H1 (cell line): ENCODE measurements at regions of chr3 and their contacts with region 1.

Region 1: DNA sequence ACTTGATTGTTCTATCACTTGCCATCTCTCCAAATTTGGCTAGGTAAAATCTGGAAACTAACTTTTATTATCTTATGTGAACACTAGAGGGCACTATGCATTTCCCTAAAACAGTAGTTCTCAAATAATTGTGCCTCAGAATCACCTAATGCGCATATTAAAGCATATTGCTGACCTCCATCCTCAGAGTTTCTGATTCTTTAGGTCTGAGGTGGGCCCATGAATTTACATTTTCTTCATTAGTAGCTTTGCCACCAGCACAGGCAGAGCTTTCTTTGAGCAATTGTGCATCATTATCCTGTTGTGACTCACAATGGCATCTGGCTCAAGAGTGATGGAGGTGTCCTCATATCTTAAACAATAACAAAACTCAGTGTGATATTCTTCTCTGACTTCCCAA is 17.5 kb upstream of the BCHE start:
- DNase-seq: no peak
- H3K4me3 ChIP-seq: no peak overlapping the region
- H3K27ac ChIP-seq: no peak overlapping the region
- H3K4me1 ChIP-seq: peaks cover 0 to 3% (median 0%) of the 10 kb centered on the region in 4 experiments; a peak in 1 of 7 replicates
- H3K27me3 ChIP-seq: no peaks in the 10 kb centered on the region
- CTCF ChIP-seq: peak in 1 of 3 experiments; percentile 51; a peak in 2 of 4 replicates
- EP300 ChIP-seq: no peak
- POLR2A ChIP-seq: no peak
- RAD21 ChIP-seq: peak; percentile 55 to 60

Region 2: DNA sequence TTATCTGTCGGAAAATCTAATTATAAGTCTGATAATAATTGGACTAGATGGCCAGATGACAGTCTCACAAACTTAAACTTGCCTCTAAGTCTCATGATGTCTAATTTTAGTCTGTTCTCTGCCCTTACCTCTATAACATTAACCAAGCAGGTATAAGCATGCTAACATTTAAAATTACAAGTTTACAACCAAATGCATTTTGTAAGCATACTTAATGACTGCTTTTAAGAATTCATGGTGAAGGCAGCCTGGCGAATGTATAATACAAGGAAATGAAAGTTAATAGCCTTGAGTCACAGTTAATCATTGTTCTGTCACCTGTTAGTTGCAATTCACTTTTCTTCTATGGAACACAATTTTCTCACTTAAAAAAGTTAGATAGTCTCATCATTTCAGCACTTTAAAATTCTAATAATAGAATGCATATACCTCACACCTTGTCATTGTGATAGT is 34.0 kb before region 1 on chr3:
- CTCF ChIA-PET with region 1: no interaction called
- POLR2A ChIA-PET with region 1: no interaction called
- DNase-seq: no peak
- H3K4me3 ChIP-seq: no peak overlapping the region
- H3K27ac ChIP-seq: no peak overlapping the region
- H3K4me1 ChIP-seq: no peaks in the 10 kb centered on the region
- H3K27me3 ChIP-seq: no peaks in the 10 kb centered on the region
- CTCF ChIP-seq: no peak
- EP300 ChIP-seq: no peak
- POLR2A ChIP-seq: no peak
- RAD21 ChIP-seq: no peak

Region 3: DNA sequence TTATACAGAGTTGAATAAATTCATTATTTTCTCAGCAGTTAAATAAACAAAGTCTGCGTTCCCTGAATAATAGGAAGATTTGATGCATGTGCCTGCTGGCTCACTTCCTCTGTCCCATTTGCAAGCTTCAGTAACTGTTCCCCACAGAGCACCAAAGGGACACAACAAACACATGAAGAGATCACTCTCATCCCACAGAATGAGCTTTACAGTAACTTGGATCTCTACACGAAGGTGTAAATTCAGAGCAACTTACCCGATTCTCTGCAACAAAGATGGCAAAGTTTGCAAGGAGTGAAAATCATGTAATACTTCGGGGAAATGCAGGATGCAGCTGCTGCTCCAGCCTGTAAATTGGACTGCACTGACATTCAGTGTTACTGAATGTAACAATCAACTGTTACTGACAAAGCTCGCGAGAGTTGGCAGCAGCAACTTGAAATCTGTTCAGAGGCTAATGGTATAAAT is 17.6 kb before region 1 on chr3 and contains the start of gene BCHE:
- CTCF ChIA-PET with region 1: no interaction called
- POLR2A ChIA-PET with region 1: no interaction called
- DNase-seq: no peak
- H3K4me3 ChIP-seq: peak within 1 kb of the TSS; percentile 15 to 47 (median 22); a peak in 5 of 8 replicates
- H3K27ac ChIP-seq: no peak within 1 kb of the TSS
- H3K4me1 ChIP-seq: peaks cover 0 to 4% (median 0%) of the 10 kb centered on the region in 4 experiments; a peak in 2 of 7 replicates
- H3K27me3 ChIP-seq: no peaks in the 10 kb centered on the region
- CTCF ChIP-seq: no peak
- EP300 ChIP-seq: no peak
- POLR2A ChIP-seq: no peak
- RAD21 ChIP-seq: no peak
- total RNA-seq, gene BCHE: 1.7 and 1.9 TPM in 2 replicates

Region 4: GRCh38 chr3:165868088-165868487 is 13.4 kb after region 1 on chr3:
- CTCF ChIA-PET with region 1: interaction called, 25 read pairs
- POLR2A ChIA-PET with region 1: no interaction called
- DNase-seq: no peak
- H3K4me3 ChIP-seq: no peak overlapping the region
- H3K27ac ChIP-seq: no peak overlapping the region
- H3K4me1 ChIP-seq: no peaks in the 10 kb centered on the region
- H3K27me3 ChIP-seq: no peaks in the 10 kb centered on the region
- CTCF ChIP-seq: no peak
- EP300 ChIP-seq: no peak
- POLR2A ChIP-seq: no peak
- RAD21 ChIP-seq: no peak

Region 5: GRCh38 chr3:165874663-165875489 is 20.2 kb after region 1 on chr3:
- CTCF ChIA-PET with region 1: interaction called, 25 read pairs
- POLR2A ChIA-PET with region 1: no interaction called
- DNase-seq: no peak
- H3K4me3 ChIP-seq: no peak overlapping the region
- H3K27ac ChIP-seq: no peak overlapping the region
- H3K4me1 ChIP-seq: no peaks in the 10 kb centered on the region
- H3K27me3 ChIP-seq: no peaks in the 10 kb centered on the region
- CTCF ChIP-seq: peak in 2 of 3 experiments; percentile 22 to 50; a peak in 3 of 4 replicates
- EP300 ChIP-seq: no peak
- POLR2A ChIP-seq: no peak
- RAD21 ChIP-seq: no peak